ENCODE measurements at regions of chr21 and their contacts with region 1.

Region 1: GRCh38 chr21:33931799-33932390 is 16.3 kb upstream of the ATP5PO start:
- DNase-seq: peak in 1 of 3 donors; percentile 58
- ATAC-seq: peak; percentile 60 to 61
- H3K4me3 ChIP-seq: peak overlapping the region; percentile 88
- H3K27ac ChIP-seq: peak overlapping the region; percentile 68
- H3K4me1 ChIP-seq: peaks cover 9% of the 10 kb centered on the region
- H3K27me3 ChIP-seq: no peaks in the 10 kb centered on the region

Region 2: DNA sequence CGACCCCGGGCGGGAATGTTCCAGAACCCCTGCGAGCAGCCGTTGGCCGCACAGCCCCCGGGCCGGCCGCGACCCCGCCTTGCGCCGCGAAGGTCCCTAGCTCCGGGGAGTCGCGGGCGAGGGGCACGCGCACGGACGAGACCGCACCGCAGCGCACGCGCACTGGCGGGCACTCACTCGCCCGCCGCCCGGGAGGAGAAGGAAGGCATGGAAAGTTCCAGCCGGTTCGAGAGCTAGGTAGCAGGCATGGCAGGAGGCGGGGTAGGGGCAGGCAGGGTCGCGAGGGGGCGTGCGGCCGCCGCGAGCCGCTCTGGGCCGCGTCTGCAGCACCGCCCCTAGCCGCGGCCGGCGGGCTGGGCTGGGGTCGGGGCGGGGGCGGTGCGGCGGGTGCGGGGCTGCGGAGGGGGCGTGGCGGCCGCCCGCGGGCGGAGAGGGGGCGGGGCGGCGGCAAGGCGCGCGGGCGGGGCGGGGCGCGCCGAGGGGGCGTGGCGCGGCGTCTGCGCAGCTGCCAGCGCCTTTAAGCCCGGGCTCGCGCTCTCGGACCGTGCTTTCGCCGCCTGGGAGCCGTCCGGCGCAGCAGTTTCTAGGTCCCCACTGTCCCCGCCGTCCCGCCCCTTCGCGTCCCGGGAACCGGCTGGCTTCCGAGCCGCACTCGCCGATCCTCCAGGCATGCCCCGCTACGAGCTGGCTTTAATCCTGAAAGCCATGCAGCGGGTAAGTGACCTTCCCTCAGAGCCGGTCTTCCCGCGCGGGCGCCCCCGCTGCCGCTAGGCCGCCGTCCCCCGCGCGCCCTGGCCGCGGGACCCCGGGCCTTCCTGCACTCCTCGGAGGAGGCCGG is 141.4 kb after region 1 on chr21 and contains the starts of genes MRPS6 and SLC5A3:
- intact Hi-C with region 1: loop called in 1 of 4 experiments (anchors 10 kb)
- DNase-seq: peak; percentile 88 to 95 (median 94)
- ATAC-seq: peak; percentile 90 to 92
- H3K4me3 ChIP-seq: peak within 1 kb of the TSS; percentile 68
- H3K27ac ChIP-seq: peak within 1 kb of the TSS; percentile 76
- H3K4me1 ChIP-seq: peaks cover 7% of the 10 kb centered on the region
- H3K27me3 ChIP-seq: no peaks in the 10 kb centered on the region
- total RNA-seq, gene MRPS6: 67.6 to 78.1 (median 73.1) TPM
- total RNA-seq, gene SLC5A3: 4.1 to 11.7 (median 6.7) TPM

Measured in right cardiac atrium (tissue), 5 donors.